ENCODE measurements at regions of chr12 and their contacts with region 1.

Region 1: GRCh38 chr12:57590536-57591479 is at the start of gene PIP4K2C:
- DNase-seq: peak; percentile 88
- H3K4me3 ChIP-seq: peak within 1 kb of the TSS; percentile 78 to 96 (median 93)
- H3K27ac ChIP-seq: peak within 1 kb of the TSS; percentile 78
- H3K4me1 ChIP-seq: peaks cover 22% of the 10 kb centered on the region
- H3K27me3 ChIP-seq: no peaks in the 10 kb centered on the region
- CTCF ChIP-seq: no peak
- total RNA-seq, gene PIP4K2C: 89.0 to 111 TPM

Region 2: GRCh38 chr12:57511588-57512325 is 79.1 kb before region 1 on chr12:
- CTCF ChIA-PET with region 1: no interaction called
- dilution Hi-C with region 1: no loop called
- in situ Hi-C with region 1: no loop called
- intact Hi-C with region 1: no loop called
- DNase-seq: no peak
- H3K4me3 ChIP-seq: no peak overlapping the region
- H3K27ac ChIP-seq: no peak overlapping the region
- H3K4me1 ChIP-seq: peaks cover 6% of the 10 kb centered on the region
- H3K27me3 ChIP-seq: no peaks in the 10 kb centered on the region
- CTCF ChIP-seq: no peak

Region 3: DNA sequence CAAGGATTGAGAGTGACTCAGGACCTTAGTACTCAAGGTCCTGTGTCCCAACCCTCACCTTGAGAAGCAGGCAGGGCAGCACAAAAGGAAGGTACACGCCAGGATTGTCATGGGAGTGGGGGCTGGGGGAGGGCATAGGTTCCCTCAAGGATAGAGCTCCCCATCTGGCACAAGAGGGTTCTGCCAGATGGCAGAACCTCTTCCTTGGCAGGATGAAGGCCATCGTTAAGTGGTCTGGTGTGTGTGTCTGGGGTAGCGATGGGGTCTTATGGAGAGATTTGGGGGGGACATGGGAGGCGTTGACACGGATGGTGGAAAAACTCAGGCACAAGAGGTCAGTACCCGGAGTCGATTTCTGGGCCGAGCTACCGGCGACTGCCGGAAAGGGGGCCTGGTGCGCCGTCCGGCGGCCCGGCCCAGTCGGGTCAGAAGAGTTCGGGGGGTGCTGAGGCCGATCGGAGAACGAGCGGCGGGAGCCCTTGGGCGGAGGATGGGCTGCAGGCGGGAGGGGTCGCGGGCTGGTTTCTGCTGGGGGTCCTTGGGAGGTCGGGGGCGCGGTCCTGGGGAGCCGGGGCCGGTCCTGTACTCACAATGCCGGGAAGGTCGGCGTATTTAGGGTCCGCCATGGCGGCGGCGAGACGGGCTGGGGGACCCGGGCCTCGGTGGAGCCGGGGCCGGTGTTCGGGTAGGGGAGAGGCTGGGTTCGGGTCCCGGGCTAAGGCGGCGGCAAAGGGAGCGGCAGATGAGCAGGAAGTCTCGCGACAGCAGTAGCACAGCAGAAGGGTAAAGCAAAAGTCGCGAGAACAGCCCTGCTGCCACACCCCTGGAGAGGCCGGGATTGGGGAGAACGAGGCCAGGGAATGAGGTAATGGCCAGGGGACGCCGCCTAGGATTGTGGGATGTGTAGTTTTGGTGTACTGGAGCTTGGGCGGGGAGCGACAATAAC is 44.1 kb before region 1 on chr12 and contains the start of gene DCTN2:
- CTCF ChIA-PET with region 1: no interaction called
- dilution Hi-C with region 1: no loop called
- in situ Hi-C with region 1: no loop called
- intact Hi-C with region 1: loop called (anchors 2 kb)
- DNase-seq: peak; percentile 95
- H3K4me3 ChIP-seq: peak within 1 kb of the TSS; percentile 76 to 84 (median 80)
- H3K27ac ChIP-seq: peak within 1 kb of the TSS; percentile 85
- H3K4me1 ChIP-seq: peaks cover 17% of the 10 kb centered on the region
- H3K27me3 ChIP-seq: no peaks in the 10 kb centered on the region
- CTCF ChIP-seq: peak in 1 of 2 donors; percentile 42
- total RNA-seq, gene DCTN2: 140 to 153 TPM

Region 4: GRCh38 chr12:57571926-57572762 is 18.7 kb before region 1 on chr12:
- CTCF ChIA-PET with region 1: no interaction called
- dilution Hi-C with region 1: no loop called
- in situ Hi-C with region 1: no loop called
- intact Hi-C with region 1: no loop called
- DNase-seq: no peak
- H3K4me3 ChIP-seq: no peak overlapping the region
- H3K27ac ChIP-seq: no peak overlapping the region
- H3K4me1 ChIP-seq: no peaks in the 10 kb centered on the region
- H3K27me3 ChIP-seq: no peaks in the 10 kb centered on the region
- CTCF ChIP-seq: no peak

Region 5: DNA sequence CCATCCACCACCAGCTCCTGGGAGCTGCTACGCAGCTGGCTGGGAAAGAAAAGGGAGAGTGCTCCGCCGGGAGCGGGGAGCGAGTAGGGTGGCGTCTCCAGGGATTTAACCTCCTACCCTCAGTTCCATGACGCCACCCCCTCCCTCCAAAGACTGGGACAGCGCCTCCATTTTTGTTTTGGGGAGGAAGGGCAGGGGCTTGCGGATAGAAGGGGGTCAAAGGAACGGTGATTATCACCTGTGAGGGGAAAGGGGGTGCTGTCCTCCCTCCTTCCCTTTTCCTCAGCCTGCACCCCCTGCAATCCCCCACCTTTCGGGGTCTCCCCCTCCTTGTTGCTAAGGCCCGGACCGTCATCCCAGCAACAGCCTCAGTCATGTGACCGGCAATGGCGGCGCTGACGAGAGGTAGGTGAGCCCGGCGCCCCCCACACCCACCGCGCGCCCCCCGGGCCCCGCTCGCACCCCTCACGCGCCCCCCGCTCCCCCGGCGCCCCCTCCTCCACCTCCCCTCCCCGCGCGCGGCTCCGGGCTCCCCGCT is 13.7 kb after region 1 on chr12 and contains the start of gene DTX3:
- CTCF ChIA-PET with region 1: no interaction called
- dilution Hi-C with region 1: no loop called
- in situ Hi-C with region 1: no loop called
- intact Hi-C with region 1: loop called (anchors 1 kb)
- DNase-seq: no peak
- H3K4me3 ChIP-seq: peak within 1 kb of the TSS; percentile 10 to 61 (median 34)
- H3K27ac ChIP-seq: no peak within 1 kb of the TSS
- H3K4me1 ChIP-seq: peaks cover 15% of the 10 kb centered on the region
- H3K27me3 ChIP-seq: no peaks in the 10 kb centered on the region
- CTCF ChIP-seq: no peak
- total RNA-seq, gene DTX3: 1.6 to 8.8 TPM

Region 6: GRCh38 chr12:57621497-57622292 is 30.9 kb after region 1 on chr12:
- CTCF ChIA-PET with region 1: no interaction called
- dilution Hi-C with region 1: loop called (anchors 5 kb)
- in situ Hi-C with region 1: no loop called
- intact Hi-C with region 1: loop called (anchors 2 kb)
- DNase-seq: no peak
- H3K4me3 ChIP-seq: peak overlapping the region; percentile 4 to 44 (median 37)
- H3K27ac ChIP-seq: no peak overlapping the region
- H3K4me1 ChIP-seq: peaks cover 7% of the 10 kb centered on the region
- H3K27me3 ChIP-seq: peaks cover 11% of the 10 kb centered on the region
- CTCF ChIP-seq: peak; percentile 79 to 92

Region 7: GRCh38 chr12:58046271-58046670 is 455.5 kb after region 1 on chr12:
- CTCF ChIA-PET with region 1: no interaction called
- dilution Hi-C with region 1: no loop called
- in situ Hi-C with region 1: no loop called
- intact Hi-C with region 1: no loop called
- DNase-seq: peak; percentile 29
- H3K4me3 ChIP-seq: no peak overlapping the region
- H3K27ac ChIP-seq: no peak overlapping the region
- H3K4me1 ChIP-seq: no peaks in the 10 kb centered on the region
- H3K27me3 ChIP-seq: no peaks in the 10 kb centered on the region
- CTCF ChIP-seq: no peak

Measured in mammary epithelial cell (primary cell).